Heart left ventricle (tissue), 16 donors: ENCODE measurements at regions of chrX and their contacts with region 1.

Region 1: GRCh38 chrX:23344904-23345271 is 10.2 kb downstream of the PTCHD1 start:
- DNase-seq: no peak
- ATAC-seq: no peak
- H3K4me3 ChIP-seq: no peak overlapping the region
- H3K27ac ChIP-seq: no peak overlapping the region
- H3K4me1 ChIP-seq: no peaks in the 10 kb centered on the region
- H3K27me3 ChIP-seq: peaks cover 0 to 21% (median 0%) of the 10 kb centered on the region in 9 donors
- CTCF ChIP-seq: no peak
- POLR2A ChIP-seq: no peak

Region 2: DNA sequence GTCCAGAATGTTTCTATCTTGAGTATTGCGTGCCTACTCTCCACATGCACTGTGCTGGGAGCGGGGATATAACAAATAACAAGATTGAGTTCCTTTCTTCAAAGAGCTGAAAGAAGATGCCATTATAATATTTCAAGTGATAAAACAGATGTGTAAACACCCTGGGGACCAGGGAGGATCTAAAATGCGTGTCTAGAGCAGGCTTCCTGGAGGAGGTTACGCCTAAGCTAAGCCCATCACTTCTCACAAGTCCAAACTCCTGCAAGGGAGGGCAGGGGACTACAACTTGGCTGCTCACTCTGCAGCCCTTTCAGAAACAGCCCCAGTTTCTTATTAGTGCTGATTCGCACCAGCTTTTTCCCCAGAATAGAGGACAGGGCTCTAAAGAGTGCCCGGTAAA is 11.3 kb after region 1 on chrX:
- intact Hi-C with region 1: loop called in 1 of 10 experiments (anchors 1 kb)
- DNase-seq: no peak
- ATAC-seq: no peak
- H3K4me3 ChIP-seq: no peak overlapping the region
- H3K27ac ChIP-seq: no peak overlapping the region
- H3K4me1 ChIP-seq: no peaks in the 10 kb centered on the region
- H3K27me3 ChIP-seq: no peaks in the 10 kb centered on the region
- CTCF ChIP-seq: no peak
- POLR2A ChIP-seq: no peak

Region 3: GRCh38 chrX:23662187-23662586 is 317.3 kb after region 1 on chrX:
- intact Hi-C with region 1: no loop called
- DNase-seq: no peak
- ATAC-seq: no peak
- H3K4me3 ChIP-seq: no peak overlapping the region
- H3K27ac ChIP-seq: peak overlapping the region in 1 of 12 donors; percentile 34
- H3K4me1 ChIP-seq: peaks cover 0 to 13% (median 0%) of the 10 kb centered on the region in 12 donors
- H3K27me3 ChIP-seq: no peaks in the 10 kb centered on the region
- CTCF ChIP-seq: no peak
- POLR2A ChIP-seq: no peak